Tibial artery (tissue), 4 donors: ENCODE measurements at regions of chr4 and their contacts with region 1.

Region 1: GRCh38 chr4:48578132-48578968 is 88.3 kb downstream of the ZAR1 start:
- DNase-seq: peak in 1 of 2 donors; percentile 74
- H3K4me3 ChIP-seq: no peak overlapping the region
- H3K27ac ChIP-seq: no peak overlapping the region
- H3K4me1 ChIP-seq: no peaks in the 10 kb centered on the region
- H3K27me3 ChIP-seq: no peaks in the 10 kb centered on the region
- CTCF ChIP-seq: peak; percentile 88 to 89

Region 2: DNA sequence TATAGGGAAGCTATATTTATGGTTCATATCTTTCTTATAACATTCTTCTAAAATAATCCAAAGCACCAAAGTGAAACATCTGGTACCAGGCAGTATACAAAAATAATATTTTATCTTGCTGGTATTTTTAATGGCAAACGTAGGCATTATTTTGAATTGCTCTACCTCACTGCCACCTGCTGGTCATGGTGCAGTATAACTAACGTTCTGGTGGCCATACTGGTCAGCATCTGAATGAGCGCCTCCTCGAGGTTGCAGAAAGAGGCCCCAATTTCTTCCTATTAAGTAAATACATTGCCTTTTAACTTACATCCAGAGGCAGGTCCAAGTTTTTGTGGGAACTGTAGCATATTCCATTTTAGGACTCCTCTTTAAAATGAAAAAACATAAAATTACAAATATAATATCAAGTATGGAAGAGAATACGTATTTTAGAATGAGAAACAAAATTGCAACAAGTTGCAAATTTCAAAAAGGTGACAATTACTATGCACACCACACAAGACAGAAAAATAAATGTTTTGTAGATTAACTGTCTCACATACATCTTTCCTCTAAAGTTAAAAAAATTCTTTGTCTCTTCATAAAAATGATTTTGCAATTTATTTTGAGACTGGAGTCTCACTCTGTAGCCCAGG is 384.8 kb after region 1 on chr4:
- intact Hi-C with region 1: loop called (anchors 5 kb)
- DNase-seq: peak; percentile 59 to 76
- H3K4me3 ChIP-seq: no peak overlapping the region
- H3K27ac ChIP-seq: no peak overlapping the region
- H3K4me1 ChIP-seq: no peaks in the 10 kb centered on the region
- H3K27me3 ChIP-seq: no peaks in the 10 kb centered on the region
- CTCF ChIP-seq: peak; percentile 92